Aorta (tissue), 5 donors: ENCODE measurements at regions of chr19 and their contacts with region 1.

Region 1: GRCh38 chr19:18846862-18847548 is 15.2 kb downstream of the UPF1 start:
- DNase-seq: peak; percentile 89 to 93
- ATAC-seq: peak; percentile 87
- H3K4me3 ChIP-seq: no peak overlapping the region
- H3K27ac ChIP-seq: no peak overlapping the region
- H3K4me1 ChIP-seq: no peaks in the 10 kb centered on the region
- H3K27me3 ChIP-seq: no peaks in the 10 kb centered on the region

Region 2: DNA sequence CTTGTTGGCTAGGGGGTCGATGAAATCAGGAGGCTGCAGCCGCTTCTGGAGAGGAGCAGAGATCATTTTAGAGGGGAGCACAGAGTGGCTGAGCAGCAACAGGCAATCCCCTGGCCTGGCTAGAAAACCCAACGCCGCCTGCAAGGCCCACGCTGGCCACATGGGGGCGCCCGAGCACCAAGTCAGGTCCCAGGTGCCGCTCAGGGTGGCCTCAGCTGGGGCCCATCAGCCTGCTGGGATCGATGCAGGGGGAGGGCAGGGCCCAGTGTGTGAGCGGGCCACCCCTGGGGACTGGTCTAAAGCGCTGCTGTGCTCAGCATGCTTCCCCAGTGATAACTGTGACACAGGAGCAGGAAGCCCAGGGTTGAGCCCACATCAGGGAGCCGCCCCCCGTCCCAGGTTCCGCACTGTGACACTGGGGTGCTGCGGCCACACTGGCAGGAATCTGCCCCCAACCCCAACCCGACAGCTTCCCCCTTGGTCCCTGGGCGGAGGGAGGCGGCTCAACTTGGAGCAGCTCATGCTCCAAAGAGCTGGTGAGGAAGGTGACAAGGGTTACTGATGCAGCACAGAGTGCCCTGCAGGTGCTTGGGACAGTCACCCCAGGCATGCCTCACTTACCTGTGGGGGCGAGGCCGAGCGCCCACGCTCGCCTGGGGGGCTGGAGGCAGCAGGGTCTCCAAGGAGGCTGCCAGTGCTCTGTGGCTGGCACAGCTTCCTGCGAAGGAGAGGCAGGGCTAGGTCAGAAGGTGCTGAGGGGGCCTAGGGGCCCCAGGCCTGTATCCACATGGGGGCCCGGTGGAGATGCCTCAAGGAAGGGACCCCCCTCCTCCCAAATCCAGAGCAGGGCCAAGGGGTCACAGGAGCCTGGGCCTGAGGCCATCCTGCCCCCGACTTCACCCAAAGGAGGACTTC is 395.8 kb before region 1 on chr19:
- intact Hi-C with region 1: loop called in 1 of 2 experiments (anchors 10 kb)
- DNase-seq: peak; percentile 87 to 96
- ATAC-seq: peak; percentile 84
- H3K4me3 ChIP-seq: no peak overlapping the region
- H3K27ac ChIP-seq: no peak overlapping the region
- H3K4me1 ChIP-seq: no peaks in the 10 kb centered on the region
- H3K27me3 ChIP-seq: no peaks in the 10 kb centered on the region

Region 3: GRCh38 chr19:18469069-18469846 is 377.7 kb before region 1 on chr19:
- intact Hi-C with region 1: loop called in 1 of 2 experiments (anchors 10 kb)
- DNase-seq: peak; percentile 72 to 91
- ATAC-seq: peak; percentile 63
- H3K4me3 ChIP-seq: no peak overlapping the region
- H3K27ac ChIP-seq: no peak overlapping the region
- H3K4me1 ChIP-seq: no peaks in the 10 kb centered on the region
- H3K27me3 ChIP-seq: no peaks in the 10 kb centered on the region

Region 4: GRCh38 chr19:18588611-18589379 is 258.2 kb before region 1 on chr19 and contains the start of gene REX1BD:
- intact Hi-C with region 1: loop called in 1 of 2 experiments (anchors 10 kb)
- DNase-seq: peak; percentile 95
- ATAC-seq: peak; percentile 92
- H3K4me3 ChIP-seq: peak within 1 kb of the TSS; percentile 68 to 80
- H3K27ac ChIP-seq: peak within 1 kb of the TSS in 1 of 2 donors; percentile 79
- H3K4me1 ChIP-seq: no peaks in the 10 kb centered on the region
- H3K27me3 ChIP-seq: no peaks in the 10 kb centered on the region
- total RNA-seq, gene REX1BD: 33.3 to 67.1 TPM

Region 5: GRCh38 chr19:18594096-18594823 is 252.7 kb before region 1 on chr19:
- intact Hi-C with region 1: loop called (anchors 2 to 10 kb)
- DNase-seq: peak; percentile 84 to 93
- ATAC-seq: peak; percentile 88
- H3K4me3 ChIP-seq: no peak overlapping the region
- H3K27ac ChIP-seq: no peak overlapping the region
- H3K4me1 ChIP-seq: no peaks in the 10 kb centered on the region
- H3K27me3 ChIP-seq: no peaks in the 10 kb centered on the region

Region 6: DNA sequence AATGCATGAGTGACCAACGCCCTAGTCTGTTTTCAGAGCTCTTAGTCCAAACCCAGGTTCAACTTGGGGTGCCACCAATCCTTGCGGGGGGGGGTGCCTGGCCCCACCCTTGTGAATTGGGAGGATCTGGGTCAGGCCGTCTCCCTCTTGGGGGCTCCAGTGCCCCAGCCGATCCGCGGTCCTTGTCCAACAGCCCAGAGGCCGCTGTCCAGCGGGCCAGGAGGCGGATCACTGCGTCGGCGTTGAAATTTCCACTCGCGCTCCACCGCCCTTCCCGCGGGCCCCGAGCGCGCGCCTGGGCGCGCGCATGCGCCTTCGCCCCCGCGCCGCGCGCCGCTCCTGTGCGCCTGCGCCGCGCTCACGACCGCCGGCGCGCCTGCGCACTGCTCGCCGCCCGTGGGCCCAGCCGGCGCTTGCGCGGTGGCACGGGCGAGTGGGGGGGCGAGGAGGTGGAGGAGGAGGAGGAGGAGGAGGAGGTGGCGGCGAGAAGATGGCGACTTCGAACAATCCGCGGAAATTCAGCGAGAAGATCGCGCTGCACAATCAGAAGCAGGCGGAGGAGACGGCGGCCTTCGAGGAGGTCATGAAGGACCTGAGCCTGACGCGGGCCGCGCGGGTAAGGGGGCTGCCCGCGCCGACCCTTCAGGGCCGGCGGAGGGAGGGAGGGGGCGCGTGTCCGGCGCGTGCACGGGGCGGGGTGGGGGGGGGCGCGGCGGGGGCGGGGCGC is 163.6 kb before region 1 on chr19 and contains the start of gene CRTC1:
- intact Hi-C with region 1: loop called in 1 of 2 experiments (anchors 10 kb)
- DNase-seq: peak; percentile 93 to 97
- ATAC-seq: peak; percentile 86
- H3K4me3 ChIP-seq: peak within 1 kb of the TSS; percentile 43 to 46
- H3K27ac ChIP-seq: peak within 1 kb of the TSS in 1 of 2 donors; percentile 42
- H3K4me1 ChIP-seq: no peaks in the 10 kb centered on the region
- H3K27me3 ChIP-seq: no peaks in the 10 kb centered on the region
- total RNA-seq, gene CRTC1: 9.5 to 16.5 TPM